GM10248 (cell line): ENCODE measurements at regions of chr3 and their contacts with region 1.

Region 1: DNA sequence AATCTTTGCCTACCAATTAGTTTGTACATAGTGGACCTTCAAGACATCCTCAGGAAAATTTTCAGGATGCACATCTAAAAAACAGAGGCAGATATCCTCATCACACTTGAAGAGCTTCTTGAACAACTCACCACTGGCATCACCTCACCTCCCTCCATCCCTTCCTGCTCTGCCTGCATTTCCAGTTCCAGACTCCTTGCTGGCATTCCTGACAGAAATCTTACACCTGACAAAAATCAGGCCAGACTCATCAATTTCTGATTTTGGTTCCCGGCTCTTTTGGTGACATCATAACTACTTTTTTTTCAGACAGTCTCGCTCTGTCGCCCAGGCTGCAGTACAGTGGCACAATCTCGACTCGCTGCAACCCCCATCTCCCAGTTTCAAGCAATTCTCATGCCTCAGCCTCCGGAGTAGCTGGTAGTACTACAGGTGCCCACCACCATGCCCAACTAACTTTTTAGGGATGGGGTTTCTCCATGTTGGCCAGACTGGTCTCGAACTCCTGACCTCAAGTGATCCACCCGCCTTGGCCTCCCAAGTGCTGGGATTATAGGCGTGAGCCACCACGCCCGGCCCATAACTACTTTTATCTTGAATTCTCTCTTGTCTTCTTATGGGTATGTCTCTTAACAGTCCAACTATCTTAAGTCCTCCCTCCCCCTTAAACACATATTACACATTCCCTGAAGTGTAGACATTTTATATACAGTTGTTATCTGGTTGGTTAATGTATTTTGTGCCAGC is 216.6 kb upstream of the IL12A start:
- DNase-seq: no peak
- CTCF ChIP-seq: no peak

Region 2: DNA sequence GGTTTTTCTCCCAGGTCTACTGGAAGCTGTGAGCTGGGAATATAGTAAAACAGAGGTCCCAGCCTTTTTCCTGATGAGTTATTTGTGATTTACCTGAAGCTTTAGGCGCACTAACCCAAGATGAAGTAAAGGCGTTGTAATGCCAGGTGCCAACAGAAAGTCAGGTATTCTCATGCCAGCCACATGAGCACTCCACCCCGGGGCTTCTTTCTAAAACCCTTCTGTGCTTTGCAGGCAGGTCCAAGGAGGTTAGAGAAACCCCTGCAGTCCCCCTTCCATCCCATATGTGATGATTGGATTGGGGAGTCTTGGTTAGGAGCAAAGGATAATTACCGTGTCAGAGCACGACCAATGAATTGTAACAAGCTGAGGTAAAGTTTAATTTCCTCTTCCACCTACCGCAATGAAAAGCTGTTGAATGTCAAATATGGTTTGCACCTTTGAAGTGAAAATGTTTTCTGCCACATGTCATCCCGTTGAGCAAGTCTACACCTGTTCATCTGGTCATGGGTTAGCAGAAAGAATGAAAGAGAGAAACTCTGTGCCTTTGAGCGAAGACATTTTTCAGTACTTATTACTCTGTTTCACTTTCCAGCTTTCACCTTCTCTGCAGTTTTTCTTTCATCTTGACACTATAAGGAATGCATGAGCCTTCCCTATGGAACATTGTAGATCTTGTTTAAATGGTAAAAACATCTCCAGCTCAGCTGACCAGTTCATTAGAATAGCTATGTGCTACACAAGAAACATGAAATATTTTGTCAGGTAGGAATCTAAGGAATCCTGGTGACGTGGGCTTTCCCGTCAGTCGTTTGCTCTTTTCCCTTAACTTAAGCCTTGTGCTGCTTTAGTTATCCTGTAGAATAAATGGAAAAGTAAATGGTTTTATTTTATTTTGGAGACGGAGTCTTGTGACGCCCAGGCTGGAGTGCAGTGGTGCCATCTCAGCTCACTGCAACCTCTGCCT is 12.0 kb after region 1 on chr3:
- CTCF ChIA-PET with region 1: interaction called, 16 read pairs
- POLR2A ChIA-PET with region 1: no interaction called
- DNase-seq: no peak
- CTCF ChIP-seq: no peak